ENCODE measurements at regions of chr17 and their contacts with region 1.

Region 1: DNA sequence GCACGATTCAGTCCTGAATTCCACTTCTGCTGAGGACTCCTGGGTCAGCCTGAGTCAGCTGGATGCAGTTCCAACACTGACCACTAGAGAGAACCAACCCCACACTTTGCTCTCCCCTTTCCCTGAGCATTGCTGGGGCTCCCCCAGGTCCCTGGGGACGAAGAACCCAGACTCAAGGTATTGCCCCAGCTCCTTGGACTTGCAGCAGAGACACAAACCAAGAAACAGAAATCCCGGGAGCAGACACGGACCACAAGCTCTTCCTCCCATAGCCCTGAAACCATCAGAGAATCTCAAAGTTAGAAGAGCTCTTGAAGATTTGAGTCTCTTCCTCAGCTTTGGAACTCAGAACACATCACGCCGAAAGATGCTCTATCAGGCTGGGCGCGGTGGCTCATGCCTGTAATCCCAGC is 678 bp upstream of the GH1 start:
- DNase-seq: peak; percentile 73
- H3K4me3 ChIP-seq: no peak overlapping the region
- H3K27ac ChIP-seq: no peak overlapping the region
- H3K4me1 ChIP-seq: no peaks in the 10 kb centered on the region
- H3K27me3 ChIP-seq: no peaks in the 10 kb centered on the region
- CTCF ChIP-seq: peak; percentile 87

Region 2: GRCh38 chr17:63946440-63947367 is 27.4 kb after region 1 on chr17:
- CTCF ChIA-PET with region 1: interaction called, 21 read pairs
- POLR2A ChIA-PET with region 1: no interaction called
- intact Hi-C with region 1: loop called (anchors 2 kb)
- DNase-seq: peak; percentile 47
- H3K4me3 ChIP-seq: no peak overlapping the region
- H3K27ac ChIP-seq: no peak overlapping the region
- H3K4me1 ChIP-seq: no peaks in the 10 kb centered on the region
- H3K27me3 ChIP-seq: no peaks in the 10 kb centered on the region
- CTCF ChIP-seq: peak; percentile 76

Region 3: GRCh38 chr17:64025732-64026294 is 106.5 kb after region 1 on chr17:
- CTCF ChIA-PET with region 1: interaction called, 13 read pairs
- POLR2A ChIA-PET with region 1: no interaction called
- intact Hi-C with region 1: loop called (anchors 5 kb)
- DNase-seq: peak; percentile 87
- H3K4me3 ChIP-seq: peak overlapping the region; percentile 13
- H3K27ac ChIP-seq: no peak overlapping the region
- H3K4me1 ChIP-seq: no peaks in the 10 kb centered on the region
- H3K27me3 ChIP-seq: no peaks in the 10 kb centered on the region
- CTCF ChIP-seq: peak; percentile 99

Region 4: DNA sequence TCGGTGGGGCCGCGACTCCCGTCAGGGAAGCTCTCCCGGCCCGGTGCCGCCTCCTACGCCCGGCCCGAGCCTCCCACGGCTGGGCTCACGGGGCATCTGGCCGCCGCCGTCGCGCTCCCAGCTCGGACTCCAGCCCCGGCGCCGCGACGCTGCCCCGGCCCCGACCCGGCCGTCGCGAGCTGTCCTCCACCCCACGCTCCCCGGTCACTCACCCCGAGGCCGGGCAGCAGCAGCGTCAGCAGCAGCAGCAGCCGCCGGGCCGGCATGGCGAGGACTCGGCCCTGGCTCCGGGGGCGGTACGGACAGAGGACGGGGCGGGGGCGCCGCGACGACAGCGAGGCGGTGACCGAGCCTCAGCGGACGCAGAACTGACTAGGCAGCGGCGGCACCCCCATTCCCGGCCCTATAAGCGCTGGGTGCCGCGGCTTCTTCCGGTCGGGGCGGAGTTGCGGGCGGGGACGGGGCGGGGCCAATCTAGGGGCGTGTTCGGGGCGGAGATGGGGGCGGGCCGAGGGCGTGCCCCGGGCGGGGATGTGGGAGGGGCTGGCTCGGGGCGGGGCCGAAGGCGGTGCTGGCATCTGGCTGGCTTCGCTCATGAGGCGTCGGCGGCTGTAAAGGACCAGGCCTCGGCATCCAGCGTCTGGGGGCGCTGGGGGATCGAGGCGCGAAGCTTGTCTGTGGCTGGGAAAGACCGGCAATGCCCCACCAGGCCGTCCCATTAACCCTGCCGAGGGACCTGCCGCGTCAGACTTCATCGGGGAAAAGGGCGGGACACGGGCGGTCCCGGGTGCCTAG is 210.6 kb after region 1 on chr17 and contains the start of gene ERN1:
- CTCF ChIA-PET with region 1: interaction called, 16 read pairs
- POLR2A ChIA-PET with region 1: no interaction called
- intact Hi-C with region 1: loop called (anchors 5 kb)
- DNase-seq: peak; percentile 84
- H3K4me3 ChIP-seq: peak within 1 kb of the TSS; percentile 91
- H3K27ac ChIP-seq: peak within 1 kb of the TSS; percentile 70
- H3K4me1 ChIP-seq: peaks cover 14% of the 10 kb centered on the region
- H3K27me3 ChIP-seq: no peaks in the 10 kb centered on the region
- CTCF ChIP-seq: no peak
- total RNA-seq, gene ERN1: 6.7 and 8.0 TPM in 2 replicates

Region 5: GRCh38 chr17:64281962-64282727 is 362.8 kb after region 1 on chr17:
- CTCF ChIA-PET with region 1: interaction called, 7 read pairs
- POLR2A ChIA-PET with region 1: no interaction called
- intact Hi-C with region 1: loop called (anchors 10 kb)
- DNase-seq: peak; percentile 85
- H3K4me3 ChIP-seq: no peak overlapping the region
- H3K27ac ChIP-seq: no peak overlapping the region
- H3K4me1 ChIP-seq: peaks cover 6% of the 10 kb centered on the region
- H3K27me3 ChIP-seq: no peaks in the 10 kb centered on the region
- CTCF ChIP-seq: peak; percentile 85

Region 6: GRCh38 chr17:64459284-64459747 is 540.0 kb after region 1 on chr17:
- CTCF ChIA-PET with region 1: no interaction called
- POLR2A ChIA-PET with region 1: no interaction called
- intact Hi-C with region 1: no loop called
- DNase-seq: no peak
- H3K4me3 ChIP-seq: no peak overlapping the region
- H3K27ac ChIP-seq: no peak overlapping the region
- H3K4me1 ChIP-seq: no peaks in the 10 kb centered on the region
- H3K27me3 ChIP-seq: no peaks in the 10 kb centered on the region
- CTCF ChIP-seq: no peak